CD4-positive, alpha-beta memory T cell (primary cell): ENCODE measurements at regions of chr3 and their contacts with region 1.

Region 1: DNA sequence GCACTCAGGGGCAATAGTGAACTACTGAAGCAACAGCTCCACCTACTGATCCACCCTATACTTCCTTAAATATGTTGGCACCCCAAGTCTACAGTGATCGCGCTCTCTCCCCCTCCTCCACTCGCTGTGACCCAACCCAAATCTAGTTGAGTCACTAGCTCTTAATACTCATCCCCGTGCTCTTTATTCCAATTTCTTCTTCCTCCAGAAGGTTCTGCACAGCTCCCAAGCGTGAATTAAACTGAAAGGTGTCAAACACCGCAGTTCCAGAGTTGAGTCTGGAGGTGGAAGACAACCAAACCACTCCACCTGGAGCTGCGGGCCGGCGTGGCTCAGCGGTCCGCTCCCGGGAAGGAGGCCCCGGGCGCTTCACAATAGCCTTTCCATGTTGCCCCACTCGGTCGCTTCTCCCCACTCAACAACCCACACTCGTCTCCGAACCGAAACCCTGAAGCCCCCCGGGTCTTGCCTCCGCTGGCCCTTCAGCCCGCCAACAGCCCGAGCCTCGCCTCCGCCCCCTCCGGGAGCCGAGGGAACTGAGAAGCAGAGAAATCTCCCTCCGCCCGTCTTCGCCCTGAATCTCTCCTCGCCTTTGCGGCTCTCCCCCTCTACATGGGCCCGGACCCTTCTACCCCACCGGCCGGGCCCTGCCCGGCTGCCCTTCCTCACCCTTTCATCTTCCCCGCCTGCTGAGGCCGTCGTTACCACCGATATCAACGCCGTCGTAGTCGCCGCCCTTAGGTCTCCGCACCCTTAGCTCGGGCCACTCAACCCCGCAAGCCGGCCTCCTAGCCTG is 578 bp downstream of the NAA50 start:
- DNase-seq: peak; percentile 82 to 92 (median 84)
- H3K4me3 ChIP-seq: peak overlapping the region; percentile 87 to 96
- H3K4me3 Mint-ChIP-seq: peak overlapping the region; percentile 92 to 100 (median 98)
- H3K27ac ChIP-seq: peak overlapping the region; percentile 99
- H3K27ac Mint-ChIP-seq: peak overlapping the region; percentile 100
- H3K4me1 ChIP-seq: peaks cover 73% of the 10 kb centered on the region
- H3K4me1 Mint-ChIP-seq: peaks cover 49 to 90% (median 62%) of the 10 kb centered on the region in 4 donors
- H3K27me3 ChIP-seq: no peaks in the 10 kb centered on the region
- H3K27me3 Mint-ChIP-seq: no peaks in the 10 kb centered on the region

Region 2: GRCh38 chr3:113051302-113051711 is 694.2 kb before region 1 on chr3:
- CTCF ChIA-PET with region 1: no interaction called
- POLR2A ChIA-PET with region 1: no interaction called
- intact Hi-C with region 1: loop called (anchors 1 kb)
- DNase-seq: peak; percentile 77 to 84 (median 80)
- H3K4me3 ChIP-seq: no peak overlapping the region
- H3K4me3 Mint-ChIP-seq: no peak overlapping the region
- H3K27ac ChIP-seq: no peak overlapping the region
- H3K27ac Mint-ChIP-seq: no peak overlapping the region
- H3K4me1 ChIP-seq: peaks cover 8% of the 10 kb centered on the region
- H3K4me1 Mint-ChIP-seq: peaks cover 0 to 9% (median 2%) of the 10 kb centered on the region in 4 donors
- H3K27me3 ChIP-seq: no peaks in the 10 kb centered on the region
- H3K27me3 Mint-ChIP-seq: no peaks in the 10 kb centered on the region

Region 3: DNA sequence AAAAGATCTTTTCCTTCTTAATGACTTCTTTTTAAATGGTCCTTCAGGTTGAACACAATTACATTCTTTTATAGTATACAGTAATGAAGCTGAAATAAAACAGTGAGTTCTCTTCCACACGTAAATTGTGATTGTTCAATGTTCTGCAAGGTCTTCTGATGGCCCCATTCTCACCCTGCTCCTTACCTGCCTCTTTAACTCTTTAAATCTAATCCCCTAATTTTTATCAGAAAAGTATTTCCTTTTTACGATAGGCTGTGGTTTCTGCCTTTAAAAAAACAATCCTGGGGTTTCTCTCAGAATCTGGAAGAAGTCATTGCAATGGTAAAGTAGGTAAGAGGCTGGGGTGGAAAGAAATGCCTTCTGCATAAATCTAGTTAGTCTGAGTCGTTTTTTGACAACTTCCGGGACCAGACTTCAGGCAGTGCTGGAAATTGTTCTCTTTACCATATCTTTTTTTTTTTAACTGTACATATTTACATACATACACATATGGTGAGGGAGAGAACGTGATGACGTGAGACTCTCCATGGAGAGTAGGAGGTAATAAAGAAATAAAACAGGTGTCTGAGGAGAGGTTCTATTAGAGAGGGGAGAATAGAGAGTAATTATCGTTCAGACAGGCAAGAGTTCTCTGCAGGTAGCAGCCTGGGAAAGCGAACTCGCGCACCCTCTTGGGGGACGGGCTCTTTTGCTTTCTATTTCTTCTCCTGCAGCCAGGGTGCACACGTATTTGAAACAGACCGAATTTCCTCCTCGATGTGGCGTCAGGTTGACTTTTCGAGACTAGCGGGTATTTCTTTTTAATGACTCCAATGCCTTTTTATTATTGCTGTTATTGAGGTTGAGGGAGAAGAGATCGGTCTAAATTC is 213.4 kb before region 1 on chr3 and contains the start of gene SIDT1:
- CTCF ChIA-PET with region 1: interaction called, 3 read pairs
- POLR2A ChIA-PET with region 1: interaction called, 16 read pairs
- intact Hi-C with region 1: loop called (anchors 1 kb)
- DNase-seq: peak; percentile 77 to 84 (median 80)
- H3K4me3 ChIP-seq: peak within 1 kb of the TSS; percentile 79 to 96
- H3K4me3 Mint-ChIP-seq: peak within 1 kb of the TSS; percentile 97 to 100 (median 99)
- H3K27ac ChIP-seq: peak within 1 kb of the TSS; percentile 90
- H3K27ac Mint-ChIP-seq: peak within 1 kb of the TSS; percentile 95 to 100 (median 100)
- H3K4me1 ChIP-seq: peaks cover 45% of the 10 kb centered on the region
- H3K4me1 Mint-ChIP-seq: peaks cover 36 to 55% (median 45%) of the 10 kb centered on the region in 4 donors
- H3K27me3 ChIP-seq: no peaks in the 10 kb centered on the region
- H3K27me3 Mint-ChIP-seq: no peaks in the 10 kb centered on the region
- total RNA-seq, gene SIDT1: 55.0 to 56.1 TPM

Region 4: DNA sequence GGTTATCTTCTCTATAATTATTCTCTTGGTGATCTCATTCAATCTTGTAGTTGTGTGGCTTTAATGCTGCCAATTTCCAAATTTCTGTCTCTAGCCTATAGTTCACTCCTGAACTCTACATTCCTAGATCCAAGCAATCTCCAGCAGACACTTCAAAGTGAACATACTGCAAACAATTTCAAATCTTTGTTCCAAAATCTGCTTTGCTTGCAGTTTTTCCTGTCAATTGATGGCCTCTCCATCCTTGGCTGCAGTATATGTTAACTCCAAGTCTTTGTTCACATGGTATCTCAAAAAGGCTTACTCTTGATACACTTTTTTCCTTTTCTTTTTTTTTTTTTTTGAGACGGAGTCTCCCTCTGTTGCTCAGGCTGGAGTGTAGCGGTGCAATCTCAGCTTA is 16.8 kb before region 1 on chr3:
- CTCF ChIA-PET with region 1: interaction called, 100 read pairs
- POLR2A ChIA-PET with region 1: interaction called, 4 read pairs
- intact Hi-C with region 1: no loop called
- DNase-seq: no peak
- H3K4me3 ChIP-seq: no peak overlapping the region
- H3K4me3 Mint-ChIP-seq: no peak overlapping the region
- H3K27ac ChIP-seq: no peak overlapping the region
- H3K27ac Mint-ChIP-seq: no peak overlapping the region
- H3K4me1 ChIP-seq: no peaks in the 10 kb centered on the region
- H3K4me1 Mint-ChIP-seq: peaks cover 20 to 28% (median 26%) of the 10 kb centered on the region in 4 donors
- H3K27me3 ChIP-seq: no peaks in the 10 kb centered on the region
- H3K27me3 Mint-ChIP-seq: no peaks in the 10 kb centered on the region

Region 5: GRCh38 chr3:113947372-113948014 is 202.0 kb after region 1 on chr3 and contains the start of gene ZDHHC23:
- CTCF ChIA-PET with region 1: no interaction called
- POLR2A ChIA-PET with region 1: no interaction called
- intact Hi-C with region 1: loop called (anchors 1 kb)
- DNase-seq: peak; percentile 71 to 79 (median 75)
- H3K4me3 ChIP-seq: peak within 1 kb of the TSS; percentile 57 to 66
- H3K4me3 Mint-ChIP-seq: peak within 1 kb of the TSS; percentile 86 to 90 (median 87)
- H3K27ac ChIP-seq: peak within 1 kb of the TSS; percentile 19
- H3K27ac Mint-ChIP-seq: peak within 1 kb of the TSS; percentile 78 to 87 (median 82)
- H3K4me1 ChIP-seq: peaks cover 14% of the 10 kb centered on the region
- H3K4me1 Mint-ChIP-seq: peaks cover 8 to 23% (median 11%) of the 10 kb centered on the region in 4 donors
- H3K27me3 ChIP-seq: no peaks in the 10 kb centered on the region
- H3K27me3 Mint-ChIP-seq: peaks cover 3 to 5% of the 10 kb centered on the region in 2 donors
- total RNA-seq, gene ZDHHC23: 5.2 to 7.3 TPM

Region 6: GRCh38 chr3:115147329-115148141 is 1402.1 kb after region 1 on chr3:
- CTCF ChIA-PET with region 1: no interaction called
- POLR2A ChIA-PET with region 1: interaction called, 4 read pairs
- intact Hi-C with region 1: loop called (anchors 1 kb)
- DNase-seq: peak; percentile 97 to 100 (median 98)
- H3K4me3 ChIP-seq: peak overlapping the region; percentile 43 to 73
- H3K4me3 Mint-ChIP-seq: peak overlapping the region; percentile 93 to 100 (median 98)
- H3K27ac ChIP-seq: peak overlapping the region; percentile 97
- H3K27ac Mint-ChIP-seq: peak overlapping the region; percentile 90 to 100 (median 100)
- H3K4me1 ChIP-seq: peaks cover 25% of the 10 kb centered on the region
- H3K4me1 Mint-ChIP-seq: peaks cover 16 to 48% (median 28%) of the 10 kb centered on the region in 4 donors
- H3K27me3 ChIP-seq: no peaks in the 10 kb centered on the region
- H3K27me3 Mint-ChIP-seq: no peaks in the 10 kb centered on the region